Sciatic nerve (tissue), 2 donors: ENCODE measurements at regions of chr9 and their contacts with region 1.

Region 1: GRCh38 chr9:131178382-131178781 is 53.0 kb downstream of the NUP214 start:
- DNase-seq: peak; percentile 72
- ATAC-seq: peak; percentile 92

Region 2: GRCh38 chr9:131334629-131335367 is 156.4 kb after region 1 on chr9:
- intact Hi-C with region 1: loop called (anchors 10 kb)
- DNase-seq: peak; percentile 59
- ATAC-seq: peak; percentile 55